ENCODE measurements at regions of chr13 and their contacts with region 1.

Region 1: DNA sequence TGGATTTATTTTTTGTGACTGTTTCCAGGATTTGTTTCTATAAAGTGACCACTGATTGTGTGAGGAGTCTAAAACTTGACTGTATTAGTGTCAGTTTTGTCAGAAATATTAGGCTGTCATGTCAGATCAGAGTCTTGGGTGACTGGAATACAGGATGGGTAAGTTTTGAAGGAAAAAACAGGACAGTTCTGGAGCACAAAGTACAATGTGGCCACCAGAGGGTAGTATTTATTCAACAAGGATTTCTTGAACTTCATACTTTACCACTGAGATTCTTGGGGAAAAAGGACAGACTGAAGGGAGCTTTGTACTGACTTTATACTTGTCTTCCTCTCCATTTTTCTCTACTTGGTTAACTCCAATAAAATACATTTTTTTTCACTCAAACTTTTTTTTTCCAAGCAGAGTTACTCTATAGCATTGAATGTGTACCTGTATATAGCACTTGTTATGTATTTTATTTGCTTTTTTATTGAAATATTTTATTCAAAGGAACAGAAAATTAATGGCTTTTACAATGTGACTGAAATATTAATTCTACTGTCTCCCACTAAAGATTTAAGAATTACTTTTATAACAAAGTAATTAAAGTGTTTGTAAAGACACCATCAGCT is 51.1 kb downstream of the LMO7 start:
- DNase-seq: no peak
- ATAC-seq: no peak
- H3K4me3 Mint-ChIP-seq: no peak overlapping the region
- H3K27ac Mint-ChIP-seq: no peak overlapping the region
- H3K4me1 Mint-ChIP-seq: peaks cover 10% of the 10 kb centered on the region
- H3K27me3 Mint-ChIP-seq: no peaks in the 10 kb centered on the region
- CTCF ChIP-seq: peak; percentile 47

Region 2: DNA sequence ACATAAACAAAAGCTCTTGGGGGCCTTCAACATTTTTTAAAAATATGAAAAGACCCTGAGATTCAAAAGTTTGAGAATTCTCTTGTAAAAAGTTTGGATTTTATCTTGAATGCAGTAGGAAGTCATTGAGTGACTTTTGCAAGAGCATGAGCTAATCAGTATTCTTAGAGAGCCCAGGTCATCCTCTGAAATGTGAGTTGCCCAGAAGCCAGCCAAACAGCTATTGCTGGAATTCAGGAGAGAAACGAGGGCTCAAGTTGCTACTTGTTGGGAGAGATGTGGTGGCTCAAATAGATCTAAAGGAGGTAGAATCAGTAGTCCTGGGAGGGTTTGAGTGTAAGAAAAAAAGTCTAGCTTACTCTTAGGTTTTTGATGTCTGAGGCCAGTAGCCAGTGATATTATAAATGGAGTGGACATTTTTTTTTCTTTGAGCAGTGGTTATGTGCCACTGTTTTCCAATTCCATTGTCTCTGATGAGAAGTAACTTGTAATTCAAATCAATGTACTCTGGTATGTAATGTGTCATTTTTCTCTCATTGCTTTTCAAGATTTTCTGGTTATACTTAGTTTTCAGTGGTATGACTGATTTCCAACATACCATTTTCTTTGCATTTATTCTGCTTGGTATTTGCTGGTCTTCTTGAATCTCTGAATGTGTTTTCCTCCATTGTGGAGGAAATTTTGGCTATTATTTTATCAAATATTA is 20.5 kb before region 1 on chr13:
- CTCF ChIA-PET with region 1: interaction called, 10 read pairs
- POLR2A ChIA-PET with region 1: no interaction called
- intact Hi-C with region 1: no loop called
- DNase-seq: no peak
- ATAC-seq: no peak
- H3K4me3 Mint-ChIP-seq: no peak overlapping the region
- H3K27ac Mint-ChIP-seq: no peak overlapping the region
- H3K4me1 Mint-ChIP-seq: no peaks in the 10 kb centered on the region
- H3K27me3 Mint-ChIP-seq: no peaks in the 10 kb centered on the region
- CTCF ChIP-seq: no peak

Measured in activated CD8-positive, alpha-beta T cell treated with anti-CD3 and anti-CD28 coated beads for 36 hours (primary cell).